ENCODE measurements at regions of chr4 and their contacts with region 1.

Region 1: DNA sequence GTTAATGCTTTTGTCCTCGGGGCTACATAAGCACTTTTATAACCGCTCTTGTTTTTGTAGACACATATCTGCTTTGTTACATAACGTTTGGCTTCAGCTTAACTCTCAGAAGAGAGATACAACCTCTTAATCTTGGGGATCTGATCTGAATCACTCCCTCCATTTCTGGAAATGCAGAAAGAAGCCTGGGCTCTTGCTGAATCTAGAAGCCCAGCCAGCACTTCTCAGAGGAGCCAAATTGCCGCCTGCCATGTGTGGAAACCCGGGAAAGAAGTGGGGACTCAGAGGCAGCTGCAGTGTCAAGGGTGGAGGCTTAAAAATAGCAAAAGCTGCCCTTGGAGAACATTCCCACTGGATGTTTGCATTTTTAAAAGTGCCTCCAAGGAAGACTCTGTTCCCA is 69.3 kb upstream of the LDB2 start:
- DNase-seq: peak; percentile 87
- H3K4me3 ChIP-seq: no peak overlapping the region
- H3K27ac ChIP-seq: peak overlapping the region in 3 of 4 donors; percentile 45 to 74 (median 56)
- H3K4me1 ChIP-seq: peaks cover 0 to 30% (median 29%) of the 10 kb centered on the region in 4 donors
- H3K27me3 ChIP-seq: no peaks in the 10 kb centered on the region
- CTCF ChIP-seq: no peak
- EP300 ChIP-seq: no peak
- POLR2A ChIP-seq: no peak

Region 2: GRCh38 chr4:16642895-16643294 is 324.8 kb before region 1 on chr4:
- intact Hi-C with region 1: no loop called
- DNase-seq: no peak
- H3K4me3 ChIP-seq: no peak overlapping the region
- H3K27ac ChIP-seq: no peak overlapping the region
- H3K4me1 ChIP-seq: no peaks in the 10 kb centered on the region
- H3K27me3 ChIP-seq: no peaks in the 10 kb centered on the region
- CTCF ChIP-seq: no peak
- EP300 ChIP-seq: no peak
- POLR2A ChIP-seq: no peak

Region 3: DNA sequence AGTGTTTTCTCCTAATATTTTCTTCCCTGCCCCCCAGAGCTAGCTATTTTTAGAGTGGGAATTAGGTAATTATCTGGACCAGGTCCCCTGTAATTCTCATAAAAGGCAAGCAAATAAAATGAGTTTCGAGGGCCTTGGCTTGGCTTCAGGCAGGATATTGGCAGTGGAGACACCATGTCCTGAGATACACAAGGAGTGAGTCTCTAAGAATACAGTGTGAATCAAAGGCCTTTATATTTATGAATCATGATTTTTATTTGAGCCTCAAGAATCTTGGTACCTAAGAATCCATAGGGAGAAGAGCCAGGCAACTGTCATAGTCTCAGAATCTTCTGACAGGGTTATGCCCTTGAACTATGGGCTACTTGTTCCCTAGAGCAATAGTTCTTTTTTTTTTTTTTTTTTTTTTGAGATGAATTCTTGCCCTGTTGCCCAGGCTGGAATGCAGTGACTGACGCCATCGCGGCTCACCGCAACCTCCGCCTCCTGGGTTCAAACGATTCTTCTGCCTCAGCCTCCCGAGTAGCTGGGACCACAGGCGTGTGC is 274.7 kb before region 1 on chr4:
- intact Hi-C with region 1: loop called (anchors 10 kb)
- DNase-seq: peak; percentile 83
- H3K4me3 ChIP-seq: no peak overlapping the region
- H3K27ac ChIP-seq: peak overlapping the region; percentile 32 to 80 (median 68)
- H3K4me1 ChIP-seq: peaks cover 0 to 28% (median 26%) of the 10 kb centered on the region in 4 donors
- H3K27me3 ChIP-seq: no peaks in the 10 kb centered on the region
- CTCF ChIP-seq: no peak
- EP300 ChIP-seq: peak in 3 of 4 donors; percentile 5 to 69 (median 17)
- POLR2A ChIP-seq: no peak

Region 4: GRCh38 chr4:16752150-16752549 is 215.6 kb before region 1 on chr4:
- intact Hi-C with region 1: no loop called
- DNase-seq: no peak
- H3K4me3 ChIP-seq: no peak overlapping the region
- H3K27ac ChIP-seq: no peak overlapping the region
- H3K4me1 ChIP-seq: no peaks in the 10 kb centered on the region
- H3K27me3 ChIP-seq: no peaks in the 10 kb centered on the region
- CTCF ChIP-seq: no peak
- EP300 ChIP-seq: no peak
- POLR2A ChIP-seq: no peak

Region 5: GRCh38 chr4:16875487-16875886 is 92.2 kb before region 1 on chr4:
- intact Hi-C with region 1: no loop called
- DNase-seq: no peak
- H3K4me3 ChIP-seq: no peak overlapping the region
- H3K27ac ChIP-seq: no peak overlapping the region
- H3K4me1 ChIP-seq: no peaks in the 10 kb centered on the region
- H3K27me3 ChIP-seq: no peaks in the 10 kb centered on the region
- CTCF ChIP-seq: no peak
- EP300 ChIP-seq: no peak
- POLR2A ChIP-seq: no peak

Region 6: GRCh38 chr4:16897991-16898827 is 69.5 kb before region 1 on chr4 and contains the start of gene LDB2:
- intact Hi-C with region 1: loop called (anchors 5 kb)
- DNase-seq: peak; percentile 88
- H3K4me3 ChIP-seq: peak within 1 kb of the TSS; percentile 6 to 50 (median 42)
- H3K27ac ChIP-seq: peak within 1 kb of the TSS; percentile 46 to 77 (median 70)
- H3K4me1 ChIP-seq: peaks cover 0 to 12% (median 4%) of the 10 kb centered on the region in 4 donors
- H3K27me3 ChIP-seq: no peaks in the 10 kb centered on the region
- CTCF ChIP-seq: no peak
- EP300 ChIP-seq: peak in 1 of 4 donors; percentile 75
- POLR2A ChIP-seq: no peak
- total RNA-seq, gene LDB2: 18.3 to 28.5 (median 20.5) TPM

Region 7: GRCh38 chr4:17068891-17069290 is 101.2 kb after region 1 on chr4:
- intact Hi-C with region 1: loop called (anchors 2 kb)
- DNase-seq: no peak
- H3K4me3 ChIP-seq: no peak overlapping the region
- H3K27ac ChIP-seq: no peak overlapping the region
- H3K4me1 ChIP-seq: peaks cover 0 to 24% (median 23%) of the 10 kb centered on the region in 4 donors
- H3K27me3 ChIP-seq: no peaks in the 10 kb centered on the region
- CTCF ChIP-seq: no peak
- EP300 ChIP-seq: no peak
- POLR2A ChIP-seq: no peak

Measured in sigmoid colon (tissue), 7 donors.